Activated T-helper 1 cell treated with anti-CD3 and anti-CD28 coated beads, Interleukin-12 subunit alpha, Interleukin-12 subunit beta, Interleukin-2, Interleukin-4 antibody, amounts not matched to agents 30 ng/mL and 10 ng/mL and 1 ng/mL, durations not matched to agents 14 hours and 24 hours and 36 hours (primary cell): ENCODE measurements at regions of chr10 and their contacts with region 1.

Region 1: GRCh38 chr10:110774069-110775019 is 97.4 kb upstream of the PDCD4 start:
- DNase-seq: peak; percentile 57
- H3K4me3 Mint-ChIP-seq: peak overlapping the region; percentile 53
- H3K27ac Mint-ChIP-seq: peak overlapping the region; percentile 96
- H3K4me1 Mint-ChIP-seq: peaks cover 62% of the 10 kb centered on the region
- H3K27me3 Mint-ChIP-seq: peaks cover 4% of the 10 kb centered on the region

Region 2: DNA sequence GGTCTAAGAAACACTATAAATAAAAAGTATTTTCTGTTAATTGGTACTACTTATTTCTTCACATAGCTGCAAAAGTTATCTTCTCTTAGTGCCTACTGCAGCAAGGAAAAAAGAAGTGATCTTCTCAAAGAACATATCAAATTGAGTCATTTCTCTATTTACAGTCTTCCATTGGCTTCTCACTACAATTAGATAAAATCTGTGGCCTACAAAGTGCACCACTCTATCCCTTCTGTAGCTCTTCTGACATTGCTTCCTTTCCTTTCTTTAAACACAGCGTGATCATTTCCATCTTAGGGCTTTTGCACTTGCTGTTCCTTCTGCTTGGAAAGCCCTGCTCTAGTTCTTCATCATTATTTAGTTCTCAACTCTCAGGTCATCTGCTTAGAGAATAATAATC is 522.2 kb before region 1 on chr10:
- intact Hi-C with region 1: loop called (anchors 2 kb)
- DNase-seq: no peak
- H3K4me3 Mint-ChIP-seq: no peak overlapping the region
- H3K27ac Mint-ChIP-seq: no peak overlapping the region
- H3K4me1 Mint-ChIP-seq: peaks cover 47% of the 10 kb centered on the region
- H3K27me3 Mint-ChIP-seq: peaks cover 24% of the 10 kb centered on the region

Region 3: DNA sequence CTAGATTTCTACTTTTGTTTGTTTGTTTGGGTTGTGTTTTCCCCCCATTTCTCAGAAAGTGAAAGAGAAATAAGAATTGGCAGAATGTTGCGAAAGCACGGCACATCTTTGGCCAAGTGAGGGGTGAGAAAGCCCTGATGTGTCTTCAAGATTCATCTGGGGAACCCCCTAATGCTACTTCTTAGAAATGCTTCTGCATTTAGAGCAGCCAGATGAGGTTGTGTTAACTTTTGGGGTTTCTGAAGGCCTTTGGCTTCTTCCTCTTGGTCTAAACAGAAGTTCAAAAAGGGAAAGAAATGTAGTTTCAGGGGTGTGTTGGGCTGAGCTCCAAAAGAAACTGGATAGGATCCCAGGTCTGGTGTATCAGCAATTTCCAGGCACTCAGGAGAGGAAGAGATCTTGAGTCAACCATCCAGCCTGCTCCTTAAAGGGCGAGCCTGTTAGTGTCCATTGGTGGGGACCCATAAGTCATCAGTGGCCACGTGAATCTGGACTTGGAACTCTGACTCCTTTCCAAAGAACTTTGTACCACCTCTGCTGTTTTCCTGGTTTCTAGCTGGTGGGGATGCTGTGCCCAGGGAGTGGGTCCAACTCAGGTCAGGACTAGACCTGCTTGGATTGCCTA is 270.1 kb before region 1 on chr10:
- intact Hi-C with region 1: loop called (anchors 1 kb)
- DNase-seq: peak; percentile 77
- H3K4me3 Mint-ChIP-seq: peak overlapping the region; percentile 100
- H3K27ac Mint-ChIP-seq: peak overlapping the region; percentile 97
- H3K4me1 Mint-ChIP-seq: peaks cover 97% of the 10 kb centered on the region
- H3K27me3 Mint-ChIP-seq: no peaks in the 10 kb centered on the region

Region 4: DNA sequence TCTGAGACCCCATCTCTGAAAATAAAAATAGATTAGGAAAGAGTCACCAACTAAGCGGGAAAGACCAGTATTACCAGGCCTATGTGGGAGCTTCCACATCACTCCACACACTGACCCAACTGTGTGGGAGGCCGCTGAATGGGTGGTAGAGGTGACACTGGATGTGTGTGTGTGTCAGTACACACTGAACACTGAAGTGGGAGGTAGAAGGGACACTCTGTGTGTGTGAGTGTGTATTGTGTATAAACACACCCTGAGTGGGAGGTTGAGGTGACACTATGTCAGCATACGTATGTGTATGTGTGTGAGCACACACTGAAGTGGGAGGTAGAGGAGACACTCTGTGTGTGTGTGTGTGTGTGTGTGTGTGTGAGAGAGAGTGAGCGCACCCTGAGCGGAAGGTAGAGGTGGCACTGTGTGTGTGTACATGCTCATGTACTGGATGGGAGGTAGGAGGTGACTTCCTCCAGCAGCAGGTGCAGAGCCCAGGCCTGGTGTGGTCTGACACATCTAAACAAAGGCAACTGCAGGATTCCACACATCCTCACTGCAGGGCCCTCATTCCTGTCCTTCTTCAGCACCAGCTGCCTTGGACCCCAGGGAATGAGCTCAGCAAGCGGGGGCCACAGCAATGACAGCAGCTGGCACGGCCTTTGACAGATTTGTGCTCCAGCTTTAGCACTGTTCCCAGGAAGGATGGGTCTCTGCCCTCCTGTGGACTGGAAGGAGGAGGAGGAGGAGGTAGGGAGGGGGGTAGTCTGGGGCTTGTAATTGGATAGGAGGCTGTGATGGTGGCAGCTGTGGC is 156.7 kb before region 1 on chr10:
- intact Hi-C with region 1: loop called (anchors 1 kb)
- DNase-seq: no peak
- H3K4me3 Mint-ChIP-seq: peak overlapping the region; percentile 47
- H3K27ac Mint-ChIP-seq: peak overlapping the region; percentile 93
- H3K4me1 Mint-ChIP-seq: peaks cover 60% of the 10 kb centered on the region
- H3K27me3 Mint-ChIP-seq: peaks cover 7% of the 10 kb centered on the region

Region 5: DNA sequence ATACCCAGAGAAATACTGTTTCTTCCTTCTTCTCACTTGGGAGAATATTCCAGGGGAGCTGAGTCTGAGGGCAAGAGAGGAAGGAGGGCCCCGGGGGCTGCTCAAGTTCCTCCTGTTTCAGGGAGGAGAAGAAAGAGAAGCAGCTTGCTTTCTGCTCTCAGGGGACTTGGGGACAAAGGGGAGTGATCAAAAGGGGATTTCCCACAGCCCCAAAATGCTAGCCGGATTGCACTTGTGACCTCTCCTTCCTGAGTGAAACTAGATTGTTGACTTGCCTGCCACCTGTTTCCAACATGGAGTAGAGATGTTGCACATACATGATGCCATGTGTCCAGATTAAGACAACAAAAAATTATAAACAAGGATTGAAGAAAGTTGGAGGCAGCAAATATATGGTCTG is 68.7 kb after region 1 on chr10:
- intact Hi-C with region 1: loop called (anchors 1 kb)
- DNase-seq: peak; percentile 66
- H3K4me3 Mint-ChIP-seq: peak overlapping the region; percentile 60
- H3K27ac Mint-ChIP-seq: peak overlapping the region; percentile 86
- H3K4me1 Mint-ChIP-seq: peaks cover 69% of the 10 kb centered on the region
- H3K27me3 Mint-ChIP-seq: no peaks in the 10 kb centered on the region

Region 6: GRCh38 chr10:110871298-110872084 is 97.1 kb after region 1 on chr10 and contains the start of gene PDCD4:
- intact Hi-C with region 1: loop called (anchors 1 kb)
- DNase-seq: peak; percentile 94
- H3K4me3 Mint-ChIP-seq: peak within 1 kb of the TSS; percentile 96
- H3K27ac Mint-ChIP-seq: peak within 1 kb of the TSS; percentile 98
- H3K4me1 Mint-ChIP-seq: peaks cover 74% of the 10 kb centered on the region
- H3K27me3 Mint-ChIP-seq: no peaks in the 10 kb centered on the region
- total RNA-seq, gene PDCD4: 46.1 and 51.8 TPM in 2 replicates

Region 7: GRCh38 chr10:111098679-111099437 is 324.5 kb after region 1 on chr10:
- intact Hi-C with region 1: no loop called
- DNase-seq: no peak
- H3K4me3 Mint-ChIP-seq: no peak overlapping the region
- H3K27ac Mint-ChIP-seq: no peak overlapping the region
- H3K4me1 Mint-ChIP-seq: no peaks in the 10 kb centered on the region
- H3K27me3 Mint-ChIP-seq: peaks cover 4% of the 10 kb centered on the region